Left cardiac atrium (tissue), 4 donors: ENCODE measurements at regions of chr1 and their contacts with region 1.

Region 1: DNA sequence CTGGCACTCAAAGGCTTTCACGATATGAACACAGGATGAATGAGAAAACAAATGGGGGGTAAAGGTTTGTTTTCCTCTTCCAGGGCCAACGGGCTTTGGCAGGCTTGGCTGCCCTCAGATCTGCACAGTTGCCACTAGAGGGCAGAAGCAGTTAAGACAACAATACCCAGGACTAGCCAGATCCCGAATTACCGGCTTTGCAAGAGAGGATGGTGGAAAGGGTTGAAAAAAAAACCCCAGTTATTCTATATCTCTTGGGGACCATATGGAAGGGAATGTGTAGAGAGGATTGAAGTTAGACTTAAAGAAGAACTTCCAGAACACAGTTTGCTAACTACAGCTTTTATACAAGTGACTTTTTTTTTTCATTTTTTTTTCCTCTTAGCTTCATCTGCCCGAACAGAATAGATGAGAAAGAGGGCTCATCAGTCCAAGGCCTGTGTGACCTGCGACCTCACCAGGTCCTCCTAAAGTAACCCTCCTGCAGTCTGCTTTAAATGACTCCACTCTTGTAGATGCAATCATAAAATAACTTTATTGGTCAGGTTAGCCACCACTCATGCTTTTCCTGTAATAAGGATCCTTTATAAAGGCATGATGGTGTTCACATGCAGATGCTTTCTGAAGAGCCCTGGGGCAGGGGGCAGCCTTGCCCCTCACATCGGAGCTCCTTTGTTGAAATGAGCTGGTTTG is 10.7 kb downstream of the FMOD start:
- DNase-seq: peak; percentile 71
- ATAC-seq: peak; percentile 81 to 89

Region 2: DNA sequence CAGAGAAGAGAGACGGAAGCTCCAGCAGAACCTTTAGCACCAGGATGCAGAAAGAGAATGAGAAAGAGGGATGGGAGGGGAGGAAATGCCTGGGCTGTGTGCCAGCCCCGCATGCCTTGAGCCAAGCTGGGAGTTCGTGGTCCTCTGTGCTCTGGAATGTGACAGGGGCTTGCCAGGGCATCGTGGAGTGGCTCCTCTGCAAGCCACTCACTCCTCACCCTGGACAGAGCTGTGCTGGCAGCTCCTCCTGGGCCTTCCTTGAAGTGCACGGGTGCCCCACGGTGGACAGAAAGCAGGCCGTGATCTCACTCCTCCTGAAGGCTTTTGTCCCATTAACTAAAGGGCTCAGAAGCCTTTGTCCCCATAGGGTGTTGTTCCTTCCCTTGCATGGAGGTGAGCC is 100.5 kb after region 1 on chr1:
- intact Hi-C with region 1: loop called (anchors 2 to 5 kb)
- DNase-seq: peak; percentile 78
- ATAC-seq: peak; percentile 91 to 97

Region 3: DNA sequence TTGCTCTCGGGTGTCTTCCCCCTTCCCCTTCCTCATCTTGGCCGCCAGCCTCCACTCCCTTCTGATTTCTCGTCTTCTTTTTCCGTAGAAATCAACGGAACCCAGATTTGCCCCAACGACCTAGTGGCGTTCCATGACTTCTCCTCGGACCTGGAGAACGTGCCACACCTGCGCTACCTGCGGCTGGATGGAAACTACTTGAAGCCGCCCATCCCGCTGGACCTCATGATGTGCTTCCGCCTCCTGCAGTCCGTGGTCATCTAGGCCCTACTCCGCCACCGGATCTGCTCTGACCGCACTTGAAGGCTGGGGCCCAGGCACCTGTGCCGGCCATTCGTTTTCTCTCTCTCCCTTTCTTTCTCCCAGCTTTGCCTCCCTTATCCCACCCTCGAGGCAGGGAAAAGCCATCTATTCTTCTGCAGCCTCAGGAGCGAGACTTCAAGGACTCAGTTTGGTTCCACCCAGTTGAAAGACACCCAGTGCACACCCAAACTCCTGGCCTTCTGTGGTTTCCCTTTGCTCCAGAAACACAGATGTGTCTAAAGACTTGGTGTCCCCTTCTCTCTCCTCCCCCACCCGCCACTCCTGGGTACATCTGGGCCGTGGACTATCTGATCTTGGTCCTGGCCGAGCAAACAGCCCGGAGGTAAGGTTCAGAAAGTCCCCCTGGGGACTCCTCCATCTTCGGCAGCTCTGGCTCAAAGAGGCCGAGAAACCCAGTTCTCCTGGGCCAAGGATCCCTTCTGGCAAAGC is 146.5 kb after region 1 on chr1:
- intact Hi-C with region 1: loop called (anchors 1 to 5 kb)
- DNase-seq: no peak
- ATAC-seq: peak in 1 of 2 donors; percentile 9

Region 4: GRCh38 chr1:203702130-203702577 is 361.9 kb after region 1 on chr1:
- intact Hi-C with region 1: loop called in 1 of 2 experiments (anchors 10 kb)
- DNase-seq: peak; percentile 33
- ATAC-seq: peak; percentile 58 to 65